ENCODE measurements at regions of chr3 and their contacts with region 1.

Region 1: DNA sequence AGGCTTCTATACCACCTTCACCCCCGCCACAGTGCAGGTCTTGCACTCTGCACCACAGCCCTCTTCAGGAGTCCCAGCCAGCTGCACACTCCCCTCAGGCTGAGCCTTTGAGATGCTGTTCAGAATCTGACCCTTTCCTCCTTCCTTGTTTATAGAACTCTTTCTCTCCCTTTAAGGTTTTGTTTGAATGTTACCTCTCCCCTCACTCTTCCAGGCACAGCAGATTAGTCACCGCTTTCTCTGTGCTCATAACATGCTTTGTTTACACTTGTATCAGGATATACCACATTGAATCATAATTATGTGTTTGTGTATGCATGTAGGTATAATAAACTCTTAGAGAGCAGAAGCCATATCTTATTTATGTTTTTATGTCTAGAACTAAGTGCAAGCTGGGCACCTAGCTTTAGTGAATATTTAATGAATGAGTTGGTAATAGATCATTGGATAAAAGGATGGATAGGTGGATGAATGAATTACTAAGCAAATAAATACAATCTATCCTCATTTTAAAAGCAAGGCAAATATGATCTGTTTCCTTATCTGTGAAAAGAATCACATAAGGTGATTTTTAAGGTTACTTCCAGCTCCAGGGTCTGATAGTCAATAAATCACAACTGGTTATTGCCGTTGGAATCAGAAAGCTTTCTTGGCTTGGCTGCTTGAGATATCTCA is 168.5 kb upstream of the BCL6 start:
- DNase-seq: peak; percentile 76
- H3K4me3 Mint-ChIP-seq: no peak overlapping the region
- H3K27ac Mint-ChIP-seq: peak overlapping the region; percentile 32
- H3K4me1 Mint-ChIP-seq: peaks cover 21% of the 10 kb centered on the region
- H3K27me3 Mint-ChIP-seq: no peaks in the 10 kb centered on the region
- CTCF ChIP-seq: no peak

Region 2: DNA sequence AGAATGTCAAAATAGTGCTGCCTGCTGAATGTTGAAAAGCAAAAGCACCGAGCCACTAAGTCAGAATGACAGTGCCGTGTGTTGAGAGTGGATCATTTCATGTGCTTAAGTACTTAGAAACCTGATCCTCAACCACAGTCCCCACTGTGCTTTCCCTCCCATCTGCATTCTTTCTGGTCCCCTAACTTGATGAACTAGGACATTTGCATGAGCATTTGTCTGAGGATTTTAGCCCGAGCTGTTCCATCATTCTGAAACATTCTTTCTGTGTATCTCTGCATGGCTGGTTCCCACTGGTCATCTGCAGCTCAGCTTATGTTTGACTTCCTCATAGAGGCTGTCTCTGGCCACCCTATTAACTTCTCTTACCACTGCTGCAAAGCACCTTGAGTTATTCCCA is 285.6 kb before region 1 on chr3:
- CTCF ChIA-PET with region 1: no interaction called
- POLR2A ChIA-PET with region 1: no interaction called
- intact Hi-C with region 1: no loop called
- DNase-seq: no peak
- H3K4me3 Mint-ChIP-seq: no peak overlapping the region
- H3K27ac Mint-ChIP-seq: no peak overlapping the region
- H3K4me1 Mint-ChIP-seq: peaks cover 32% of the 10 kb centered on the region
- H3K27me3 Mint-ChIP-seq: peaks cover 12% of the 10 kb centered on the region
- CTCF ChIP-seq: no peak

Region 3: DNA sequence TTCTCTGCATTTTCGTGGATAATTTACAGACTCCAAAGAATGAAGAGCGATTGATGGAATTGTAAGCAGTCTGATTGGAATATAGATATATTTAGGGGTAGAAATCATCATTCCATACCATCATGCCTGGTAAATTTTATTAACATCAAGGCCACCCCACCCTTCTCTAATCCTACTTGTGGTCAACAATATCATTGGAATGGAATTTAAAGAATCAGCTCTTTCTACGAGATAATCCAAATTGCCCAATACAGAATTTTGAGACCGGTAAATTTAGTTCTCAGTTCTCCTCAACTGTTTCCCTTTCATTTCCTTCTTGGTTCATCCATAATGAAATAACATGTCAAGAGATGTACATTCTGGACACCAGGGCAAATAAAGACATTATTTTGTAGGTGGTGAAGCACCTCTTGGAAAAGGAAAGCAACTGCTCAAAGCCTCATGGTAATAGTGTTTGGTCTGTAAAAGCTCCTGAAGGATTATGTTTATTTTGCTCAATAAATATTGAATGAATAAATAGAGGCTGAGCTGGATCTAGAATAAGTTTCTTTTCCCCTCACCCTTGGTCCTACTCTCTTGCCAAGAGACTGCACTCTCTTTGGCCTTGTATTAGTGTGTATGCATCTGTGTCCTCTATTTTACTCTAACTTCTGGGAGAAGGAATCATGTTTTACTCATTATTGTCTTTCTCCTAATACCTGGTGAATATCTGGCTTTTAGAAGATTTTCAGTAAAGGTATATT is 34.8 kb before region 1 on chr3:
- CTCF ChIA-PET with region 1: no interaction called
- POLR2A ChIA-PET with region 1: interaction called, 14 read pairs
- intact Hi-C with region 1: no loop called
- DNase-seq: peak; percentile 28
- H3K4me3 Mint-ChIP-seq: peak overlapping the region; percentile 49
- H3K27ac Mint-ChIP-seq: peak overlapping the region; percentile 29
- H3K4me1 Mint-ChIP-seq: peaks cover 23% of the 10 kb centered on the region
- H3K27me3 Mint-ChIP-seq: no peaks in the 10 kb centered on the region
- CTCF ChIP-seq: no peak